ENCODE measurements at regions of chr12 and their contacts with region 1.

Region 1: GRCh38 chr12:123972457-123973401 is at the starts of genes CCDC92 and ZNF664:
- DNase-seq: peak; percentile 89 to 98 (median 96)
- ATAC-seq: peak; percentile 74
- H3K4me3 ChIP-seq: peak within 1 kb of the TSS; percentile 58
- H3K4me3 Mint-ChIP-seq: peak within 1 kb of the TSS; percentile 97
- H3K27ac ChIP-seq: peak within 1 kb of the TSS in 1 of 2 donors; percentile 38
- H3K27ac Mint-ChIP-seq: peak within 1 kb of the TSS; percentile 91
- H3K4me1 ChIP-seq: peaks cover 13% of the 10 kb centered on the region
- H3K4me1 Mint-ChIP-seq: peaks cover 48% of the 10 kb centered on the region
- H3K27me3 ChIP-seq: no peaks in the 10 kb centered on the region
- H3K27me3 Mint-ChIP-seq: no peaks in the 10 kb centered on the region
- CTCF ChIP-seq: no peak
- total RNA-seq, gene CCDC92: 11.5 to 12.7 TPM
- total RNA-seq, gene ZNF664: 13.4 to 19.0 TPM

Region 2: DNA sequence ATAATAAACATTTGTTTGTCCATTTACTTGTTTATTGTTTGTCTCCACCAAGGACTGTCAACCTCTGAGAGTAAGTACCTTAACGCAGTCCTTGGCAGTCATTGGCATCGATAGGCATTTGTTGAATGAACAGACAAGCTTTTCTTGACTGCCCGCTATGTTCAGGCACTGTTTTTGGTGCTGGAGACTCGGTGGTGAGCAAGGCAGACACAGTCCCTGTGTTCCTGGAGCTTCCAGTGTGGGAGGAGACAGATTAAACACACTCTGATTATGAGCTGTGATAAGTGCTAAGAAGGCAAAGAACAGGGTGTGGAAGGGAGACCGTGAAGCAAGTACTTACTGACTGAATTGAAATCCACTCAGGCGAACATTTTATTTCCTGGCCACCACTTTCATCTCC is 259.3 kb before region 1 on chr12:
- CTCF ChIA-PET with region 1: no interaction called
- POLR2A ChIA-PET with region 1: interaction called, 3 read pairs
- intact Hi-C with region 1: loop called in 1 of 2 experiments (anchors 1 kb)
- DNase-seq: peak in 1 of 14 experiments; percentile 17
- ATAC-seq: no peak
- H3K4me3 ChIP-seq: peak overlapping the region; percentile 87
- H3K4me3 Mint-ChIP-seq: peak overlapping the region; percentile 85
- H3K27ac ChIP-seq: no peak overlapping the region
- H3K27ac Mint-ChIP-seq: peak overlapping the region; percentile 62
- H3K4me1 ChIP-seq: peaks cover 27% of the 10 kb centered on the region
- H3K4me1 Mint-ChIP-seq: peaks cover 38% of the 10 kb centered on the region
- H3K27me3 ChIP-seq: no peaks in the 10 kb centered on the region
- H3K27me3 Mint-ChIP-seq: no peaks in the 10 kb centered on the region
- CTCF ChIP-seq: no peak

Region 3: DNA sequence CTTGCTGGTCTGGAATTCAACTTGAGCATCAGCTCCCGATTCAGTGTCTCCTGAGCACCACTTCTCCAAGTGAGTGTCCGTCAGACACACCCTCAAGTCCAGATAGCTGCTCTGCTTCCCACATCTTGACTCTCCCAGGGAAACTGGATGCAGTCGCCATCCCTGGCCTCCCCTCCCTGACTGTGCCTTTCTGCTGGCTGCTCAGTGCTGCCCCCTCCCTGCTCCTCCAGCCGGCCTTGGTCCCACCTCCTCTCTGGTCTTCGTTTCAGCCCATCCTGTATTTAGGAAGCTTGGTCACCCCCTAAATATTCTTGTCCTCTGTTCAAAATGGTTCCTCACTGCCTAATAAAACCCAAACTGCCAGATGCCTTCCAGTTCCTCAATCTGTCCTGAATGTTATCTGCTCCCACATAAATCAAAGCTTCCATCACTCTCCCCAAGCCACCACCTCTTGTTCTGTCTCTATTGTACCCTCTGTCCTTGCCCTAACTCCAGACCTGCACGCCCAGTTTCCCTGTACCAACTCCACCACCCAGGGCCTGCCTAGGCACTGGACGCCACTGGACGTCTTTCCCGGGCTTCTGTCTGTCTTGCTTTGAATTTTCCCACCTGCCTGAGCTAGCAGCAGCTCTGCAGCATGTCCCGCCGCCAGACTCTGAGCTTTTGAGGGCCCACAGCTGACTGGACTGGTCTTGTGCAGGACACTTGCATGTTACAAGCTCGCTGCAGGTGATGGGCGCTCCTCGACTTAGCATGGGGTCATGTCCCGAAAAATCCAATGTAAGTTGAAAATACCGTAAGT is 33.8 kb before region 1 on chr12:
- CTCF ChIA-PET with region 1: no interaction called
- POLR2A ChIA-PET with region 1: interaction called, 13 read pairs
- intact Hi-C with region 1: loop called in 1 of 2 experiments (anchors 5 kb)
- DNase-seq: peak in 2 of 14 experiments; percentile 32
- ATAC-seq: no peak
- H3K4me3 ChIP-seq: no peak overlapping the region
- H3K4me3 Mint-ChIP-seq: peak overlapping the region; percentile 66
- H3K27ac ChIP-seq: peak overlapping the region; percentile 25 to 58
- H3K27ac Mint-ChIP-seq: peak overlapping the region; percentile 87
- H3K4me1 ChIP-seq: peaks cover 27% of the 10 kb centered on the region
- H3K4me1 Mint-ChIP-seq: peaks cover 27% of the 10 kb centered on the region
- H3K27me3 ChIP-seq: no peaks in the 10 kb centered on the region
- H3K27me3 Mint-ChIP-seq: no peaks in the 10 kb centered on the region
- CTCF ChIP-seq: no peak

Region 4: GRCh38 chr12:124567661-124568373 is 595.1 kb after region 1 on chr12:
- CTCF ChIA-PET with region 1: no interaction called
- POLR2A ChIA-PET with region 1: no interaction called
- intact Hi-C with region 1: loop called in 1 of 2 experiments (anchors 2 kb)
- DNase-seq: peak; percentile 68 to 94 (median 83)
- ATAC-seq: peak; percentile 71
- H3K4me3 ChIP-seq: peak overlapping the region; percentile 72
- H3K4me3 Mint-ChIP-seq: peak overlapping the region; percentile 95
- H3K27ac ChIP-seq: peak overlapping the region in 1 of 2 donors; percentile 35
- H3K27ac Mint-ChIP-seq: peak overlapping the region; percentile 87
- H3K4me1 ChIP-seq: peaks cover 51% of the 10 kb centered on the region
- H3K4me1 Mint-ChIP-seq: peaks cover 40% of the 10 kb centered on the region
- H3K27me3 ChIP-seq: no peaks in the 10 kb centered on the region
- H3K27me3 Mint-ChIP-seq: no peaks in the 10 kb centered on the region
- CTCF ChIP-seq: no peak